WTC11 (cell line): ENCODE measurements at regions of chr12 and their contacts with region 1.

Region 1: GRCh38 chr12:54032627-54033100 is at the start of gene HOXC5:
- DNase-seq: peak; percentile 86
- ATAC-seq: peak; percentile 13
- H3K4me3 Mint-ChIP-seq: peak within 1 kb of the TSS; percentile 47
- H3K27ac Mint-ChIP-seq: no peak within 1 kb of the TSS
- H3K4me1 Mint-ChIP-seq: peaks cover 36% of the 10 kb centered on the region
- H3K27me3 Mint-ChIP-seq: peaks cover 99% of the 10 kb centered on the region
- CTCF ChIP-seq: peak; percentile 99
- total RNA-seq, gene HOXC5: not detected in 3 replicates

Region 2: DNA sequence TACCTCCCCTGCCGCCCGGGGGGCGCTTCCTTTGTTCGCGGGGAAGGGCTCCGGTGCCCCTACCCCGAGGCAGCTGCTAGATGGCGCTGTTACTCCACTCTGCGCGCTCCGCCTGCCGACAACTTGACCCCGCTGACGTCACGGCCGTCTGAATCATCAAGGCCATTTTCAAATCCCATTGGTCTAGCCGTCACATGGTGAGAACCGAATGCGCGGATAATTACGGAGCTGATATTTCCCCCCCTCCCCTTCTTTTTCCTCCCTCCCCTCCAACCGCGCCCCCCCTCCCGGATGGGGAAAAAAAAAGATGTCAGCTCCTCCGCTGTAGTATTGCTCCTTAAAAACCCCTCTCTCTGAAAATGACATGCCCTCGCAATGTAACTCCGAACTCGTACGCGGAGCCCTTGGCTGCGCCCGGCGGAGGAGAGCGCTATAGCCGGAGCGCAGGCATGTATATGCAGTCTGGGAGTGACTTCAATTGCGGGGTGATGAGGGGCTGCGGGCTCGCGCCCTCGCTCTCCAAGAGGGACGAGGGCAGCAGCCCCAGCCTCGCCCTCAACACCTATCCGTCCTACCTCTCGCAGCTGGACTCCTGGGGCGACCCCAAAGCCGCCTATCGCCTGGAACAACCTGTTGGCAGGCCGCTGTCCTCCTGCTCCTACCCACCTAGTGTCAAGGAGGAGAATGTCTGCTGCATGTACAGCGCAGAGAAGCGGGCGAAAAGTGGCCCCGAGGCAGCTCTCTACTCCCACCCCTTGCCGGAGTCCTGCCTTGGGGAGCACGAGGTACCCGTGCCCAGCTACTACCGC is 47.6 kb before region 1 on chr12 and contains the start of gene HOXC10:
- CTCF ChIA-PET with region 1: interaction called, 22 read pairs
- POLR2A ChIA-PET with region 1: no interaction called
- DNase-seq: peak; percentile 95
- ATAC-seq: peak; percentile 56
- H3K4me3 Mint-ChIP-seq: peak within 1 kb of the TSS; percentile 52
- H3K27ac Mint-ChIP-seq: no peak within 1 kb of the TSS
- H3K4me1 Mint-ChIP-seq: peaks cover 34% of the 10 kb centered on the region
- H3K27me3 Mint-ChIP-seq: peaks cover 100% of the 10 kb centered on the region
- CTCF ChIP-seq: peak; percentile 76
- total RNA-seq, gene HOXC10: 0.09 TPM in 1 of 3 replicates, not detected in the others

Region 3: DNA sequence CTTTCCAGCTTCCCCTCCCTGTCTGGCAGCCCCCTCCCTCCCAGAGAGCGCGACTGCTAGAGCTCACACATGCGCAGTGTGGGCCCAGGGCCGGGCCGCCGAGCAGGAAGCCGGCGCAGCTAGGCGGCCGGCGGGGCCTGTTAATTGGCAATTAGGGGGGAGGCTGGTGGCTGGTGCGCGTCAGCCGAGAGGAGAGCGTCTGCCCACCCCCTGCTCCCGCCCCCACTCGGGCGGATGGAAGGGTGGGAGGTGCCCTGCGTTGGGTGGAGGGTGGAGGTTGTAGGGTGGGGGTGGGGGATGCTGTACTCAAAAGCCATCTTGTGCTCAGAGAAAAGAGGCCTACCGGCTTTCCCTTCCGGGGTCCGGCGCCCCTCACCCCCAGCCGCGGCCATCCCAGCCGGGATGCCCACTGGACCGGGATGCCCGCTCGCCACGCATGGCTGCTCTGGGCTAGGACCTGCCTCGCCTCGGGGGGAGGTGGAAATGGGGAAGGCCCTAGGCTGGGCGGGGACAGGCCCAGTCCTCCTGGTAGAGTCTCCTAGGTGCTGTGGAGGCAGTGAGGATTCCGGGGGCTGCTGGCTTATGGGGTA is 14.7 kb before region 1 on chr12:
- CTCF ChIA-PET with region 1: interaction called, 25 read pairs
- POLR2A ChIA-PET with region 1: interaction called, 4 read pairs
- DNase-seq: peak; percentile 83
- ATAC-seq: peak; percentile 57
- H3K4me3 Mint-ChIP-seq: peak overlapping the region; percentile 63
- H3K27ac Mint-ChIP-seq: no peak overlapping the region
- H3K4me1 Mint-ChIP-seq: peaks cover 26% of the 10 kb centered on the region
- H3K27me3 Mint-ChIP-seq: peaks cover 99% of the 10 kb centered on the region
- CTCF ChIP-seq: no peak

Region 4: GRCh38 chr12:54060975-54061778 is 28.5 kb after region 1 on chr12:
- CTCF ChIA-PET with region 1: interaction called, 14 read pairs
- POLR2A ChIA-PET with region 1: no interaction called
- DNase-seq: no peak
- ATAC-seq: no peak
- H3K4me3 Mint-ChIP-seq: no peak overlapping the region
- H3K27ac Mint-ChIP-seq: no peak overlapping the region
- H3K4me1 Mint-ChIP-seq: peaks cover 43% of the 10 kb centered on the region
- H3K27me3 Mint-ChIP-seq: peaks cover 98% of the 10 kb centered on the region
- CTCF ChIP-seq: no peak

Region 5: GRCh38 chr12:54134850-54135249 is 102.2 kb after region 1 on chr12:
- CTCF ChIA-PET with region 1: interaction called, 19 read pairs
- POLR2A ChIA-PET with region 1: no interaction called
- DNase-seq: no peak
- ATAC-seq: no peak
- H3K4me3 Mint-ChIP-seq: no peak overlapping the region
- H3K27ac Mint-ChIP-seq: no peak overlapping the region
- H3K4me1 Mint-ChIP-seq: peaks cover 11% of the 10 kb centered on the region; the same call in 1 of the 2 replicates
- H3K27me3 Mint-ChIP-seq: peaks cover 100% of the 10 kb centered on the region
- CTCF ChIP-seq: no peak

Region 6: GRCh38 chr12:54191550-54192022 is 158.9 kb after region 1 on chr12:
- CTCF ChIA-PET with region 1: interaction called, 149 read pairs
- POLR2A ChIA-PET with region 1: interaction called, 4 read pairs
- DNase-seq: peak; percentile 87
- ATAC-seq: peak; percentile 81
- H3K4me3 Mint-ChIP-seq: no peak overlapping the region
- H3K27ac Mint-ChIP-seq: no peak overlapping the region
- H3K4me1 Mint-ChIP-seq: peaks cover 18% of the 10 kb centered on the region
- H3K27me3 Mint-ChIP-seq: peaks cover 73% of the 10 kb centered on the region
- CTCF ChIP-seq: peak; percentile 84

Region 7: DNA sequence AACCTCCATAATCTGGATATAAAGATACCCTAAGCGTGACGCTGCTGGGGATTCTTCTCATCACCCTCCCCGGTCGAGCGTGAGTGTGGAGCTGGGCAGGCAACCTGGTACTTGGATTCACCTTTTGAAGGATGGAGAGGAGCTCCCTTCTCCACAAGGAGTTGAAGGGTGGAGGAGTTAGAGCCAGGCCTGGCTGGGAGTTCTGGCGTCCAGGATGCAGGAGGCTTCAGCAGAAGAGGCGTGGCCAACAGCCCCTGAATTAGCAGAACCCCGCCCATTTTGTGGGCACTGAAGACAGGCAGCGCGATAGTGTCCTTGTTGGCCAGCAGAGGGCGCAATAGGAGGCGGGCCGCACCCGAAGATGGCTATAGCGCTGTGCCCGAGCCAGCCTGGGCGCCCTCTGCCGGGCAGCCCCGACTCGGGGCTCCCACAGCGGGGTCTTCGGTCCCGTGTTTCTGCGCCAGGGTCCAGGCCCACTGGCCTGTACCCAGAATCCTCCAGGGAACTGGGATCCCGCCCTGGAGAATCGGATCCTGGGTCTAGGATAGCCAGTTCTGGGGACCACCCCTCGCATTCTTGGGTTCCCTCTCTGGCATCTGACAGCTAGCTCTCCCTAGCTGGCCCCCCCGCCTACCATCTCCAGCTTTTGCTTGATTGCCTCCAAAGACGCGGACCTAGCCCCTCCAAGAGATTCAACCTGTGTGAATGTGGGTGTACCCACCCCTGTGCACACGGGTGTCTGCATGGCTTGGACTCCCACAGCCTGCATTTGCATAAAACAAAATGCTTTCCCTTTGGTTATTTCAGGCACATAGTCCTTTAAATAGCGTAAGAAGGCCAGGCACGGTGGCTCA is 182.1 kb after region 1 on chr12:
- CTCF ChIA-PET with region 1: interaction called, 21 read pairs
- POLR2A ChIA-PET with region 1: no interaction called
- DNase-seq: peak; percentile 97
- ATAC-seq: peak; percentile 71
- H3K4me3 Mint-ChIP-seq: peak overlapping the region; percentile 16; the same call in 1 of the 2 replicates
- H3K27ac Mint-ChIP-seq: no peak overlapping the region
- H3K4me1 Mint-ChIP-seq: peaks cover 33% of the 10 kb centered on the region
- H3K27me3 Mint-ChIP-seq: peaks cover 79% of the 10 kb centered on the region
- CTCF ChIP-seq: peak; percentile 96